Sciatic nerve (tissue), 2 donors: ENCODE measurements at regions of chr4 and their contacts with region 1.

Region 1: DNA sequence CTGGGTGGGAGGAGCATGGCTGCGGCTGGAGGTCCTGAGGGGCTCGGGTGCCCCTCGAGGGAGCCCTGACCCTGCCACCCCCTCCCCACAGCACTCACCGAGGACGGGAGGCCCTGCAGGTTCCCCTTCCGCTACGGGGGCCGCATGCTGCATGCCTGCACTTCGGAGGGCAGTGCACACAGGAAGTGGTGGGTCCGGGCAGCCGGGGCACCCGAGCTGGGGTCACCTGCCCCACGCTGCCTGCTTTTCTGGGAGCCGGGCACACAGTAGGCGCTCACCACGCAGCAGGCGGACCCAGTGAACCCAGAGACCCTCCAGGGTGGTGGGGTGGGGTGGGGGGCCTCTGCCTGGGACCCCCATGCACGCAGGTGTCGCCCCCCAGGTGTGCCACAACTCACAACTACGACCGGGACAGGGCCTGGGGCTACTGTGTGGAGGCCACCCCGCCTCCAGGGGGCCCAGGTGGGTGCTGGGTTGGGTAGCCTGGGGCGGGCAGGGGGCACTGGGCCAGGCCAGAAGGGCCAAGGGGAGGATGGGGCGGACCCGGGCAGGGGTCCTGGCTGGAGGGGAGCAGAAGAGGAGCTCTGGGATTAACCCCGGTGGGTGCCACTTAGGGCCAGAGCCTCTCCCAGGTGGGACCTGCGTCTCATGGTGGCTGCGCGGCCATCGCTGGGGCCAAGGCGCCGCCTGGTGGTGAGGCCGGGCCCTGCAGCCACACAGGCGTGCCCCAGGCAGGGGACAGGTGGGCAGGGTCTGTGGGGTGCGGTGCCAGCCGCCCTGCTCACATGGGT is 1.4 kb downstream of the HGFAC start:
- DNase-seq: no peak
- ATAC-seq: peak; percentile 54

Region 2: DNA sequence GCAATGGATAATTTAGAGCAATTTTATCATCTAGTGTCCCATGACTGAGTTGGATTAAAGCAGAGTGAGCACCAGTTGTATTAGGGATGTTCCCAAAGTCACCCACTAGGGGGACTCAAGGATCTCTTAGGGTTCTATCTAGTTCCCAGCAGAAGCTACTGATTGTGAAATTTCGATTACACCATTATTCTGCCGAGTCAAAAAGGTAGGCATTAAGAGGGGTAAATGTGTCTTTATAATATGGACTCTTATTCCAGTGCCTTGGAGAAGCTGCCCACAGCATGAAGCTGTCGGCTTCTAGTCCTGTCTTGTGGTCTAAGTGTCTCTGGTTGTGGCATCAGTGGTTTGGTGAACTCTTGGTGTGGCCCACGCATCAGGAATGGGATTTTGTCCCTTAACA is 97.0 kb before region 1 on chr4:
- intact Hi-C with region 1: loop called (anchors 5 kb)
- DNase-seq: no peak
- ATAC-seq: peak; percentile 95